CD14-positive monocyte (primary cell): ENCODE measurements at regions of chr17 and their contacts with region 1.

Region 1: DNA sequence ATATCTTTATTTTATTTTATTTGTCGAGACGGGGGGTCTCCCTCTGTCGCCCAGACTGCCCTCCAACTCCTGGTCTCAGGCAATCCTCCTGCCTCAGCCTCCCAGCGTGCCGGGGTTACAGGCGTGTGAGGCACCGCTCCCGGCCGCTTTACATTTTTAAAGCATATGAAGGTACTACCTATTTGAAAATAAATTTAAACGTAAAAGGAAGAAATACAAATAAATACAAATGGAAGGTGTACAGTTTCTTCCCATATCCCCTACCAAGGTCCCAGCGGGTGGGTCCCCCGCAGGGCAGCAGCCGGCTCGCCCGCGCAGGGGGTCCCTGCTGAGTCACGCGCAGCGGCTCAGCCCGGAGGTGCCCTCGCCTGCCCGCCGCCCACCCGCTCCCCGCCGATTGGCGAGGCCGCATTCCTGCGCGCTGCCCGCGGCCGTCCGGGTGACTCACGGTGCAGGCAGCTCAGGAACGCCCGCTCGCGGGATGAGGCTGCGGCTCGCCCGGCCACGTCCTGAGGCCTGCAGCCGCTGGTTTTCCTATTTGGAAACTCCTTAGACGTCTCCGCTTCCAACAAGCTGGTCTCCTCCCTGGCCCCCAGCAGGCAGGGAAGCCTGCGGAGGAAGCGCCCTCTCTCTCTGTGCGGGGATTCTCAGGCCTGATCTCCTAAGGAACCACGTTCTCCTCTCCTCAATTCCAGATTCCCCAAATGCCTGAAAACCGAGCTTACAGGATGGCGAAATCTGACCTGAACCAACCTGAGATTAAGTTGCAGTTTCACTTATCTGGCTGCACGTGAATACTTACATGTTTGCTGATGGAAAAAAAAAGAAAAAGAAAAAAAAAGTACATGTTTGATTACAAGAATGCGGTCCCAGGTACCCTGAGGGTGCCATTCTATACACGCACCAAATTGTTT is 54.9 kb upstream of the MAP3K14 start:
- DNase-seq: peak; percentile 27 to 69 (median 60)
- H3K4me3 ChIP-seq: peak overlapping the region in 1 of 3 experiments; percentile 57
- H3K4me3 Mint-ChIP-seq: peak overlapping the region; percentile 16 to 88
- H3K27ac ChIP-seq: no peak overlapping the region
- H3K27ac Mint-ChIP-seq: peak overlapping the region in 4 of 7 donors; percentile 19 to 83 (median 48)
- H3K4me1 ChIP-seq: peaks cover 28 to 39% of the 10 kb centered on the region in 2 donors
- H3K4me1 Mint-ChIP-seq: peaks cover 32% of the 10 kb centered on the region
- H3K27me3 ChIP-seq: peaks cover 0 to 3% of the 10 kb centered on the region in 2 donors
- H3K27me3 Mint-ChIP-seq: peaks cover 11 to 19% (median 14%) of the 10 kb centered on the region in 3 donors
- CTCF ChIP-seq: no peak

Region 2: GRCh38 chr17:45332989-45333701 is 38.5 kb before region 1 on chr17:
- intact Hi-C with region 1: loop called (anchors 5 kb)
- DNase-seq: peak; percentile 50 to 72 (median 72)
- H3K4me3 ChIP-seq: no peak overlapping the region
- H3K4me3 Mint-ChIP-seq: peak overlapping the region in 1 of 2 donors; percentile 63
- H3K27ac ChIP-seq: no peak overlapping the region
- H3K27ac Mint-ChIP-seq: peak overlapping the region in 5 of 7 donors; percentile 16 to 79 (median 76)
- H3K4me1 ChIP-seq: peaks cover 38 to 39% of the 10 kb centered on the region in 2 donors
- H3K4me1 Mint-ChIP-seq: peaks cover 41% of the 10 kb centered on the region
- H3K27me3 ChIP-seq: no peaks in the 10 kb centered on the region
- H3K27me3 Mint-ChIP-seq: peaks cover 2 to 9% (median 3%) of the 10 kb centered on the region in 3 donors
- CTCF ChIP-seq: no peak